ENCODE measurements at regions of chr15 and their contacts with region 1.

Region 1: DNA sequence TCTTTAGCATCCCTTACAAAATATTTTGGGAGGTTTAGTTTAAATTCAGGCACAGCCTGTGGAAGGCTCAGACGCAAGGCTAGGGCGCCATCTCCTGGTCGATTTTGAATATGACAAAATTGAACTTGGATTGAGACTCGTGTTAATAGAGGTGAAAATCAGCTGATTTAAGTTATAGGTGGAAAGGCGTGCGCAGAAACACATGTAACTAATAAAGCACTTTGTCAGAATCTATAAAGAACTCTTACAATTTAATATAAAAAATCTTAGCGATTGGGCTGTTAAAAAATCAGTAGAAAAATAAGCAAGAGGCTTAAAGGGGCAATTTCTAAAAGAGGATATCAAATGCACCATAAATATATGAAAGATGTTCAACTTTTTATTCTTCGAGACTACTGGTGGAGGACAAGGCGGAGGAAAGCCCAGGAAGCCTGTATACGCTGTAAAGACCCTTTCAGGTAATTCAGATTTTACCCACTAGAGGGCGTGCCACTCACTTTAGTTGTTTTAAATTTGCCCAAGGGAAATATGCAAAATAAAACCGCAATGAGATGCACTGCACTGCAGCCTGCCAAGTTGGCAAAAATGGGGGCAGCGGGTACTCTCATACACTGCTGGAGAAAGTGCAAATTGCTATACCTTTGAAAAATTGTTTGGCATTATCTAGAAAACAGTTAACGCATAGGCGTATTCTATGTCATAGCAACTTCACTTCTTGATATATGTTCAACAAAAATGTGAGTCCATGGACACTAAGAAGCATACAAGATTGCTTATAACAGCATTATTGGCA is 64.7 kb downstream of the SLC30A4 start:
- DNase-seq: peak; percentile 30 to 33
- ATAC-seq: peak; percentile 76 to 91
- H3K4me3 ChIP-seq: peak overlapping the region; percentile 50 to 75 (median 56)
- H3K27ac ChIP-seq: peak overlapping the region; percentile 74 to 82 (median 75)
- H3K4me1 ChIP-seq: no peaks in the 10 kb centered on the region
- H3K27me3 ChIP-seq: no peaks in the 10 kb centered on the region
- CTCF ChIP-seq: peak; percentile 42 to 85 (median 77)
- POLR2A ChIP-seq: no peak

Region 2: DNA sequence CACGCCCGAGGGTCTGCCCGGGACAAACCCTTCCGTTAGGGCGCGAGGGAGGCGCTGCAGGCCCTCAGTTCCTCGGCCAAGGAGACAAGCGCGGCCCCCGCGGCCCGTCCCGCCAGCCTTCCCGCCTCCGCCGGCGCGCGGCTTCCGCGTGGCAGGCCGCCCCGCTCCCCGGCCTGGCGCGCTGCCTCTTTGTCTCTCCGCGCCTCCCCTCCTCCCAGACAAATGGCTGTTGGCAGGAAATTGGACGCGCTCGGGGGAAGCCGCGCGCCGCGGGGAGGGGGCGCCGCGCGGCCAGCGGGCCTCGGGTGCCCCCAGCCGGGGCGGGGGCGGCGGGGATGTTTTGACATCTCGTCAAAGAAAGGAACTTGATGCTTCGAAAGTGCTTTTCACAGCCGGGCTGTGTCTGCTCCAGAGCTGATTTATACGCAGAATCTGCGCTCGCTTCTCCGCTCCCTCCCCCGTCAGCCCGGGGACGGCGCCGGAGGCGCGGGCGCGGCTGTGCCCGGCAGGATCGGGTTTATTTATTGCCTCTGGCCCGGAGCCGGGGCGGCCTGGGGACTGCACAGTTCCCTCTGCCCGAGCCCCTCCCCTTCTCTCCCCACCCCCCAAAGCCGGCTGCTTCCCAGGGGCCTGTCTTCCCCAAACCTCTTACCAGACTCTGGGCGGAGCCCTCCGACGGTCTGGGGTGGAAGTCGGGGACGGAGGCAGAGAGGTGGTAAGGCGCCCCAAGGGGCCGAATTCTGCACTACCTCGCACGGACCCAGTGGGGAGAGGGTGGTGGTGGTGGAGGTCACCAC is 290.8 kb before region 1 on chr15:
- in situ Hi-C with region 1: no loop called
- intact Hi-C with region 1: loop called (anchors 2 kb)
- DNase-seq: peak; percentile 64 to 78
- ATAC-seq: peak; percentile 78 to 82
- H3K4me3 ChIP-seq: peak overlapping the region; percentile 66 to 77 (median 75)
- H3K27ac ChIP-seq: peak overlapping the region; percentile 84 to 92 (median 89)
- H3K4me1 ChIP-seq: peaks cover 0 to 4% of the 10 kb centered on the region in 2 donors
- H3K27me3 ChIP-seq: no peaks in the 10 kb centered on the region
- CTCF ChIP-seq: peak; percentile 26 to 59 (median 51)
- POLR2A ChIP-seq: peak; percentile 14 to 20

Region 3: DNA sequence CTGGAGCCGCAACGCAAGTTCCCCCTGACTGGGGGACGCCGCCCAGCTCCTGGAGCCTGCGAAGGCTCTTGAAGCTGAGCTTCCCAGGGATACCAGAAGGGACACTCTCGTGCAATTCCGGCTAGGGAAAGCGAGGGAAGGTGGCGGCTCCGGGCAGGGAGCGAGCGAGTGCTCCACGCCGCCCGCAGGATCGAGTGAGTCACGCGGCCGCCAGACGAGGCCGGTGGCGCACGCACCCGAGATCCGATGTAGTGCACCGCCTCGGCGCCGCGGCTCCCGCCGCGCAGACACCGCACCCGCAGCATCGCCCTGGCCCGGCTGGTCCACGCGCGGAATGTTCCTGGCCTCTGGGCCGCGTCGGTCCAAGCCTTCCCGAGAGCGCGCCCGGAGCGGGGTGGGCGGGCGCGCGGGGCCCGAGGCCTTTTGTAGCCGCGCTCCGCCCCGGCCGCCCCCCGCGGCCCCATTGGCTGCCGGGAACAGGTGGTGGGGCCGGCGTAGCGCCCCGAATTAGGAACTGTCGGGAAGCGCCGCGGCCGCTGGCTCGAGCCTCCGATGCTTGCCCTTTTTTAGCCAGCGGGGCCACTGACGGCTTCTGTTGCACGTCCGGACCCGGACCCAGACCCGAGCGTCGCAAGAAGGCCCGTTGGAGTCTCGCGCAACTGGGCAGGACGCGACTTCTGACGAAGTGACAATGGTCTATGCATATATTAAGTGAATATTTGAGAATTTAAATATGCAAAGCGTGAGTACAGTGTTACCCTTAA is 79.5 kb before region 1 on chr15 and contains the start of gene GATM:
- in situ Hi-C with region 1: no loop called
- intact Hi-C with region 1: loop called (anchors 2 kb)
- DNase-seq: peak; percentile 71
- ATAC-seq: peak; percentile 78 to 94
- H3K4me3 ChIP-seq: peak within 1 kb of the TSS; percentile 60 to 86 (median 71)
- H3K27ac ChIP-seq: peak within 1 kb of the TSS; percentile 78 to 88 (median 82)
- H3K4me1 ChIP-seq: peaks cover 25 to 31% of the 10 kb centered on the region in 2 donors
- H3K27me3 ChIP-seq: no peaks in the 10 kb centered on the region
- CTCF ChIP-seq: peak; percentile 22 to 59 (median 51)
- POLR2A ChIP-seq: peak; percentile 84 to 92
- total RNA-seq, gene GATM: 18.0 to 92.1 (median 35.3) TPM

Region 4: GRCh38 chr15:45429974-45430792 is 27.7 kb before region 1 on chr15:
- in situ Hi-C with region 1: no loop called
- intact Hi-C with region 1: loop called (anchors 1 kb)
- DNase-seq: no peak
- ATAC-seq: peak in 1 of 2 donors; percentile 33
- H3K4me3 ChIP-seq: peak overlapping the region; percentile 27 to 55 (median 35)
- H3K27ac ChIP-seq: no peak overlapping the region
- H3K4me1 ChIP-seq: peaks cover 4 to 6% of the 10 kb centered on the region in 2 donors
- H3K27me3 ChIP-seq: peaks cover 0 to 6% (median 0%) of the 10 kb centered on the region in 3 donors
- CTCF ChIP-seq: peak; percentile 51 to 85 (median 72)
- POLR2A ChIP-seq: no peak

Region 5: DNA sequence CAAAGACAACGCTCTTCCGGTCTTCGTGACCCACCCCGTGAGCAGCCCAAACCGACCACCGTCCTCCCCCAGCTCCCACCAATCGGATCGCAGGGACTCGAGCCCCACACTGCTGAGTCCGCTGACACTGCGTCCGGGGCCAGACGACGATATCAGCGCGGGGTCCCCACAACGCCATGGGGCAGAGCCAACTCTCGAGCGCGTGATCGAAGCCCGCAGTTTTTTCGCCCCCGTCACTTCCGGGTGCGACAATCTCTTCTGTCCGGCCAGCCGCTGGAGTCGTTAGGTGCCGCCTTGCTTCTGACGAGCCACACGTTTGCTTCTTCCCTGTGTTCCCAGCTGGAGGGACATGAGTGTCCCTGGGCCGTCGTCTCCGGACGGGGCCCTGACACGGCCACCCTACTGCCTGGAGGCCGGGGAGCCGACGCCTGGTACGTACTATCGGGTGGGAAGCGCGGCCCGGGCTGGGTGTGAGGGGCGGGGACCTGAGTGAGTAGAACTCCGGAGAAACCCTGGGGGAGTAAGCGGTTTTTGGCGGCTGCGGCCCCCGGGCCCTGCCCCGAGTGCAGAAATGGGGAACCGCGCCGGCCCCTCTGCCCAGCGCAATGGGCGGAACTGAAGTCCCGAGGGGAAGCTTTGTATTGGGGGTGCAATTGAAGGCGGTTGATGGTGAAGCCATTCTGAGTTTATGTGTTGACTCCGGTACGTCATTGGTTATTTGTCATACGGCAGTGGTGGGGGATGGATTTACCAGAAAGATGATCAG is 129.4 kb after region 1 on chr15 and contains the start of gene BLOC1S6:
- in situ Hi-C with region 1: no loop called
- intact Hi-C with region 1: loop called (anchors 5 kb)
- DNase-seq: peak; percentile 78 to 82
- ATAC-seq: peak; percentile 96
- H3K4me3 ChIP-seq: peak within 1 kb of the TSS; percentile 87 to 98 (median 92)
- H3K27ac ChIP-seq: peak within 1 kb of the TSS; percentile 95 to 100 (median 97)
- H3K4me1 ChIP-seq: peaks cover 33 to 37% of the 10 kb centered on the region in 2 donors
- H3K27me3 ChIP-seq: no peaks in the 10 kb centered on the region
- CTCF ChIP-seq: peak in 1 of 5 experiments; percentile 15
- POLR2A ChIP-seq: peak; percentile 68 to 72
- total RNA-seq, gene BLOC1S6: 32.9 to 38.2 (median 36.6) TPM

Region 6: DNA sequence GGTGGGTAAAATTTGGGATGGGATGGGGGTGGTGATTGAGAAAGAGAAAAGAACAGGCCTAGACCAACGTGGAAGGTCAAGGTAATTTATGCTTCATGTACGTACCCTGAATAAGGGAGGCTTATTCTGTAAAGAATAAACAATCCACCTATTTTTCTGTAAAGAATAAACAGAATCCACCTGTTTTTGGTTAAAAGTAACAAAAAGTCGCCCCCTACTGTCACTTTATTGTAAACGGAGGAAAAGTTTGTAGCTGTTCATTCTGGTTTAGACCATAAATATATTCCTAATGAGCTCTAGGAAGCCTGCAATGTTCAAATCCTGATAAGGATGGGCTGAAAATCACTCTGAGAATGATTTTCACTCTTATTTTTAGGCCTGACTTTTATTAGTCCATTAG is 153.5 kb after region 1 on chr15:
- in situ Hi-C with region 1: loop called in 2 of 4 experiments (anchors 10 to 25 kb)
- intact Hi-C with region 1: loop called (anchors 1 kb)
- DNase-seq: no peak
- ATAC-seq: no peak
- H3K4me3 ChIP-seq: no peak overlapping the region
- H3K27ac ChIP-seq: no peak overlapping the region
- H3K4me1 ChIP-seq: no peaks in the 10 kb centered on the region
- H3K27me3 ChIP-seq: no peaks in the 10 kb centered on the region
- CTCF ChIP-seq: peak in 1 of 5 experiments; percentile 11
- POLR2A ChIP-seq: no peak

Region 7: DNA sequence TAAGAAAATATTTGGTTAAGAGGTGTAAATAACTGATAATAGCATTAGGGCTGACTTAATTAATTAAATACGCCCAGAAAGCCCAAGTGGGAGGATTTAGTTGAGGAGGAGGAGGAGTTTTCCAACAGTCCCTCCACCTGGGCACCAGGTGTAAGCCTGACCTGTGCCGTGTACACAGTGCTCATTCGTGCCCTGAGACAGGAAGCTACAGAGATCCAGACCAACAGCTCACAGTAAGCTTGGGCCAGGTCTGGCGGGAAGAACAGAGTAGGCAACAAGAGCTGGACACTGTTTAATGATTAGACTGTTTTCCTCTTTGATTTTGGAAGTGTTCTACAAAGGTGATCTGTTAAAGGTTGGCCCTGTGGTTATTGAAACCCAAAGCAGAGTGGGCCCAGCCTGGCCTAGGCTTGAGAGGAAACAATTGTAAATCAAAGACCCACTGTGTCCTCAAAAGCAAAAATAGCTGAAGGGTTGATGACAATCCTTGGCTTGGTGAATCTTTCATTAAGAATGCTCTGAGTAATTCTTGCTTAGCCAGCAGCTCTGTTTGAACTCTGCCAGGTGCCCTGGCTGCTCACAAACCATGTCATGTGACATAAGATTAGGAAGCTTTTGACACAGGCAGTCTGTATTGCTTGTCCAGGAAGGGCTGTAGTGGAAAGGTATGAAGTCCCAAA is 190.8 kb after region 1 on chr15:
- in situ Hi-C with region 1: no loop called
- intact Hi-C with region 1: no loop called
- DNase-seq: peak; percentile 32 to 68
- ATAC-seq: peak; percentile 88 to 96
- H3K4me3 ChIP-seq: no peak overlapping the region
- H3K27ac ChIP-seq: peak overlapping the region; percentile 71 to 76 (median 72)
- H3K4me1 ChIP-seq: peaks cover 51 to 58% of the 10 kb centered on the region in 2 donors
- H3K27me3 ChIP-seq: no peaks in the 10 kb centered on the region
- CTCF ChIP-seq: no peak
- POLR2A ChIP-seq: no peak

Region 8: DNA sequence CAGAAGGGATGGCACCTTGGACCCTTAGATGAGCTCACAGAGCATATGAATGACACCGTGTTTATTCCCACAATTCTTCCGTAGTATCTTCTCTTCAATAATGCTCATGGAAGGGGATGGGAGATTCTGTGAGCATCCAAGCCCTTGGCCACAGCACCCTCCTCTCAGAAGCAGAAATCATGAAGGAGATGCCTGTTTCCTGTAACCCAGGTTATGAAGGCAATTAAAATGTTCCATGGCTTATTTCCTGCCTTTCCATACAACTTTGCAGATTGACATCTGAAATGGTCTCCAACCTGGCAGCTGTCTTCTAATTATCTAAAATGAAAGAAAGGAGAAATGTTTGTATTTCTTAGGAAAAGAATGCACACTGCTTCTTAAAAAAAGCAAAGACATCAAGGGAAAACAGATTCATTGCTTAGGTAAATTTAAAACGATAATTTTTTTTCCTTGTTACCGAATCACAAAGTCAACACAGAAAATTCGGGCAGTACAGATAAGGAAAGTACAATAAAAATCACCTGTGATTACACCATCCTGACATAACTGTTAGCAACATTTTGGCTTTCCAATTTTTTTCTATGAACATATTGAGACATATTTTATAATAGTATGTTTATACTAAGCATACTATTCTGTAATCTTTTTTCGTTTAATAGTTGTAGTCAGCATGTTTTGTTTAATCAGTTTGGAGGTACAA is 305.5 kb after region 1 on chr15:
- in situ Hi-C with region 1: no loop called
- intact Hi-C with region 1: no loop called
- DNase-seq: no peak
- ATAC-seq: no peak
- H3K4me3 ChIP-seq: no peak overlapping the region
- H3K27ac ChIP-seq: no peak overlapping the region
- H3K4me1 ChIP-seq: no peaks in the 10 kb centered on the region
- H3K27me3 ChIP-seq: no peaks in the 10 kb centered on the region
- CTCF ChIP-seq: no peak
- POLR2A ChIP-seq: no peak